HCT116 (cell line): ENCODE measurements at regions of chr10 and their contacts with region 1.

Region 1: GRCh38 chr10:49592726-49593563 is 17.2 kb upstream of the SLC18A3 start:
- DNase-seq: peak; percentile 42
- ATAC-seq: peak; percentile 87
- H3K4me3 ChIP-seq: no peak overlapping the region
- H3K27ac ChIP-seq: no peak overlapping the region
- H3K4me1 ChIP-seq: no peaks in the 10 kb centered on the region
- H3K27me3 ChIP-seq: no peaks in the 10 kb centered on the region
- CTCF ChIP-seq: peak; percentile 61 to 99 (median 99); a peak in 5 of 6 replicates
- POLR2A ChIP-seq: no peak
- RAD21 ChIP-seq: peak; percentile 56

Region 2: GRCh38 chr10:50044941-50045664 is 452.2 kb after region 1 on chr10:
- CTCF ChIA-PET with region 1: no interaction called
- POLR2A ChIA-PET with region 1: no interaction called
- RAD21 ChIA-PET with region 1: no interaction called
- intact Hi-C with region 1: no loop called
- DNase-seq: no peak
- ATAC-seq: no peak
- H3K4me3 ChIP-seq: no peak overlapping the region
- H3K27ac ChIP-seq: no peak overlapping the region
- H3K4me1 ChIP-seq: no peaks in the 10 kb centered on the region
- H3K27me3 ChIP-seq: no peaks in the 10 kb centered on the region
- CTCF ChIP-seq: no peak
- POLR2A ChIP-seq: no peak
- RAD21 ChIP-seq: no peak

Region 3: GRCh38 chr10:50224330-50224952 is 631.5 kb after region 1 on chr10:
- CTCF ChIA-PET with region 1: interaction called, 4 read pairs
- POLR2A ChIA-PET with region 1: no interaction called
- RAD21 ChIA-PET with region 1: no interaction called
- intact Hi-C with region 1: loop called (anchors 1 kb)
- DNase-seq: peak; percentile 65
- ATAC-seq: peak; percentile 99
- H3K4me3 ChIP-seq: no peak overlapping the region
- H3K27ac ChIP-seq: no peak overlapping the region
- H3K4me1 ChIP-seq: peaks cover 0 to 5% of the 10 kb centered on the region in 2 experiments; a peak in 1 of 4 replicates
- H3K27me3 ChIP-seq: no peaks in the 10 kb centered on the region
- CTCF ChIP-seq: peak; percentile 67 to 75 (median 73)
- POLR2A ChIP-seq: no peak
- RAD21 ChIP-seq: peak; percentile 81

Region 4: DNA sequence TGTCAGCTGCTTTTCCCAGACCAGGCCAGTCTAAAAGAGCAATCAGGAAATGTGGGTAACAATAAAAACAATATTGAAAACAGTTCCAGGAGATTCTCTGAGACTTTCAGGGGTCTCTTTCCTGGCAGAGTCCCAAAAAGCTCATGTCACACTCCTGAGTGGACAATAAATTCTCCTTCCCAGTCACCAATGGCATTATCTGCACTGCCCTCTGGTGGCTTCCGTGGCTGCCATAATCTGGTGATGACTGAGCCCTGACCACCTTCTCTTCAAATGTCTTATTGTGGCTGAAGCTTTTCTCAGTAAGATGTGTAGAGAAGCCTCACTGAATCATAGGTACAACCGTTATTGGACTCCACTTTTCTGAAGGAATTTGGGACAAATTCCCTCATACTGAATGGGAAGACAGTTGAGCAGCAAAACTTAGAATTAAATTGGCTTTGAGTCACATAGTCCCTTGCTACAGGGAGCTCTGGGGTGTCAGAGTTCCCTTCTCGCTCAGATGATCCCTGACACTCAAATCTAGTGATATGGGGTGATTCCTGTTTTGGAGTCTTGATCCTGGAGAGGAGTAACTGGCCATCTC is 682.8 kb after region 1 on chr10:
- CTCF ChIA-PET with region 1: interaction called, 7 read pairs
- POLR2A ChIA-PET with region 1: no interaction called
- RAD21 ChIA-PET with region 1: no interaction called
- intact Hi-C with region 1: loop called (anchors 1 kb)
- DNase-seq: no peak
- ATAC-seq: peak; percentile 79
- H3K4me3 ChIP-seq: no peak overlapping the region
- H3K27ac ChIP-seq: no peak overlapping the region
- H3K4me1 ChIP-seq: peaks cover 0 to 9% of the 10 kb centered on the region in 2 experiments; a peak in 3 of 4 replicates
- H3K27me3 ChIP-seq: no peaks in the 10 kb centered on the region
- CTCF ChIP-seq: peak; percentile 30 to 78 (median 78); a peak in 5 of 6 replicates
- POLR2A ChIP-seq: no peak
- RAD21 ChIP-seq: peak; percentile 52